Activated B cell treated with CpG ODN at 0.5 μM for 24 hours (primary cell): ENCODE measurements at regions of chr1 and their contacts with region 1.

Region 1: DNA sequence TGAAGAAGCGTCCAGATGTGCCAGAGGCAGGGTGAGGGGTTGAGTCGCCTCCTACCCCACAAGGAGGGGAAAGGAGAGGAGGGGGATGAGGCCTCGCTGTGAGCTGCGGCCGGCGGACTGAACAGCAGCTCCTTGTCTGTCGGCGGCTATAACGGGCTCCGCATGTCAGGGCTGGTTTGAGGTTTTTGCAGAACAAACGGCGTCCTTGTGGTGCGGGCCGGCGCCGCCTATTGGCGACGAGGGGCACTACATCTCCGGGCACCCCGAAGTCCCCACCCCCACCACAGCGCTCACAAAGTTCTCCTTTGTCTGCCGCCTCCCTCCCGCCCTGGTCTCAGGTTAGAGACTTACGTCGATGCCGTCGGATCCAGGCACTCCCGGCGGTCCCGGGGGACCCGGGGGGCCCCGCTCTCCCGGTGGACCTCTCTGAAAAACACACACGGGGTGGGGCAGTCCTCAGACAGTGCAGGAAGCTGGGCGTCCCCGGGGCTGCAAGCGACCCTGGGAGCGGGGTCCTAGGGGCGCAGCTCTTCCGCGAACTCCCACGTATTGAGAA is 1.8 kb downstream of the COL9A2 start:
- DNase-seq: peak; percentile 84
- ATAC-seq: peak; percentile 61
- H3K4me3 Mint-ChIP-seq: peak overlapping the region; percentile 85
- H3K27ac Mint-ChIP-seq: peak overlapping the region; percentile 51
- H3K4me1 Mint-ChIP-seq: peaks cover 53% of the 10 kb centered on the region
- H3K27me3 Mint-ChIP-seq: peaks cover 7% of the 10 kb centered on the region
- CTCF ChIP-seq: no peak

Region 2: GRCh38 chr1:40096977-40097782 is 218.1 kb before region 1 on chr1 and contains the start of gene PPT1:
- CTCF ChIA-PET with region 1: no interaction called
- POLR2A ChIA-PET with region 1: interaction called, 3 read pairs
- intact Hi-C with region 1: loop called (anchors 5 kb)
- DNase-seq: peak; percentile 69
- ATAC-seq: peak; percentile 86
- H3K4me3 Mint-ChIP-seq: peak within 1 kb of the TSS; percentile 94
- H3K27ac Mint-ChIP-seq: peak within 1 kb of the TSS; percentile 92
- H3K4me1 Mint-ChIP-seq: peaks cover 18% of the 10 kb centered on the region
- H3K27me3 Mint-ChIP-seq: peaks cover 5% of the 10 kb centered on the region
- CTCF ChIP-seq: no peak
- total RNA-seq, gene PPT1: 41.8 and 43.5 TPM in 2 replicates

Region 3: DNA sequence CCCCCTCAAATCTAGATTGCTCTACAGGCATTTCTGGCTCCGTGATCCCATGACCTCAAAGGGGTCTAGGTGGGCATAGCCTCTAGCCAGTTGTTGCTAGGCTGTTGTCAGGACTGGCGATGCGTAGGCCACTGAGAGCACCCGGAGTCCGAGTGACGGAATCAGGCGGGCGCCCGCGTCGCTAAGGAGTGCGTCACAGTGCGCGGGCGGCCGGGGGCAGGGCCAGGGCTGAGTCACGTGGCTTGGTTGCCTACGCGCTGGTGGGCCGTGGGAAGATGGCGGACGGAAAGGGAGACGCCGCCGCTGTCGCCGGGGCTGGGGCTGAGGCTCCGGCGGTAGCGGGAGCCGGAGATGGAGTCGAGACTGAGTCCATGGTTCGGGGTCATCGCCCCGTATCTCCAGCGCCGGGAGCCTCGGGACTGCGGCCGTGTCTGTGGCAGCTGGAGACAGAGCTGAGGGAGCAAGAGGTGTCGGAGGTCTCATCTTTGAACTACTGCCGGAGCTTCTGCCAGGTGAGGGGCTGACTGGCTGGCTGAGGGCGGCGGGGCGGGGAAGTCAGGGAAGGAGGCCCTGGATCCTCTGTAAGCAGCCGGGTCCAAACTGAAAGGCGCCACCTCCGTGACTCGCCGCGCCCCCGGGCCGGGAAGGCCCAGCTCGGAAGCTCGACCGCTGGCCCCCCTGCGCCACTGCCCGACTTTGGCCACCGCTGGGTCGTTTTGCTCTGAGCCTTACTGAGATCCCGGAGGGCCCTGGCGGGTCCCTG is 154.0 kb before region 1 on chr1 and contains the start of gene RLF:
- CTCF ChIA-PET with region 1: interaction called, 3 read pairs
- POLR2A ChIA-PET with region 1: interaction called, 12 read pairs
- intact Hi-C with region 1: no loop called
- DNase-seq: peak; percentile 94
- ATAC-seq: peak; percentile 96
- H3K4me3 Mint-ChIP-seq: no peak within 1 kb of the TSS
- H3K27ac Mint-ChIP-seq: no peak within 1 kb of the TSS
- H3K4me1 Mint-ChIP-seq: peaks cover 22% of the 10 kb centered on the region
- H3K27me3 Mint-ChIP-seq: no peaks in the 10 kb centered on the region
- CTCF ChIP-seq: no peak
- total RNA-seq, gene RLF: 18.1 and 19.2 TPM in 2 replicates

Region 4: DNA sequence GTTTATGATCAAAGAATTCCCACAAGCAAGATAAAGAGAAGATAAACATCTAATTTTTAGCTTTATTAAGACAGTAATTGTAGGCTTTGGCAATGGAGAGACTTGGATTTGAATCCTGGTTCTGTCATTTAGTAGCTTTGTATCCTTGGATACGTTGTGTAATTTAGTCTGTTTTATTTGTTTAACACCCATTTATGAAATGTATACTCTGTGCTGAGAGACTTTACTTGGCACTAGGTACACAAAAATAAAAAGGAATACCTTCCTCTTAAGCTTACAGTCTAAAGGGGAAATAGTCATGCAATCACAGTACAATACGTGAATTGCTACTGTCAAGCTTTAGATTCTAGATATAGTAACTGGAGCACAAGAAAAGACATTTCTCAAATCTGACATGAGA is 33.5 kb before region 1 on chr1:
- CTCF ChIA-PET with region 1: interaction called, 3 read pairs
- POLR2A ChIA-PET with region 1: interaction called, 4 read pairs
- intact Hi-C with region 1: loop called (anchors 5 kb)
- DNase-seq: no peak
- ATAC-seq: no peak
- H3K4me3 Mint-ChIP-seq: no peak overlapping the region
- H3K27ac Mint-ChIP-seq: no peak overlapping the region
- H3K4me1 Mint-ChIP-seq: no peaks in the 10 kb centered on the region
- H3K27me3 Mint-ChIP-seq: no peaks in the 10 kb centered on the region
- CTCF ChIP-seq: no peak

Region 5: DNA sequence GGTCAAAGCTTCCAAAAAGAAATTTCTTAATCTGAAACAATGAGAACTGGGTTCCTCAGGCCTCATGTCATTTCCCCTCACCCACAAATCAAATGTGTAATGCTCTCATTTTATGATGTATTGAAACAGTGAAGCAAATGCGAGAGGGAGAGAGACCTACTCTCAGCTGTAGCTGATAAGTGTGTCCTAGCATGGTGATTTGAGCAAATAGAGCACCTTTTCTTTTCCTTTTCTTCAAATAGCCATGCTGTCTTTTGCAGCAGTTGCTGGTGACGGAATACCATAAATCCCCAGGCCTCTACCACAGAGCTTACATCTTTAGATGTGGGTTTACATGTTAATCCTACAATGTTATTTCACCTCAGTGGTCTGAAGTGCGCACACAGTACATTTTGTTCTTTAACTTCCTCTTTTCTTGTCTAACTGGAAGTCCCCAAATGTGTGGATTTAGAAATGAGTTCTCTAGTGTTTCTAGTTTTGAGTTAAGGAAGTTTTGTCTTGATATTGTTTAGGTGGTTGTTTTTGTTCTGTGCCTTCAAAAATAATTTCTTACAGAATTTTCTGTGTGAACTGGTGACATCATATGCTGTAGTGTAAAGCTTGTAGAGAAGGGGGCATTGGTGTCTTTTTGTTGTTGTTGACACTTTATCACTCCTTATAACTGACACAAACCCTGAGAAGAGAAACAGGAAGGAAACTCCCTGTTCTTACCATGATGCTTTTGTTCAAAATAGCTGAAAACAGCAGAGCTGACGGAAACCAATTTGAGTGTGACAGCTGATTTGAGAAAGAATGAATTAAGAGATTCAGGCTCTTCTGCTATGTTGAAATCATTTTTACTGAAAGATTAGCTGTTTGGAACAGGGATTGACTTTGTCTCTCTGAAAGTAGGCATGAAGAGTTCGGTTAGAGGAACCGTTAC is 70.4 kb after region 1 on chr1:
- CTCF ChIA-PET with region 1: interaction called, 18 read pairs
- POLR2A ChIA-PET with region 1: interaction called, 51 read pairs
- intact Hi-C with region 1: loop called (anchors 1 kb)
- DNase-seq: no peak
- ATAC-seq: peak; percentile 71
- H3K4me3 Mint-ChIP-seq: peak overlapping the region; percentile 74
- H3K27ac Mint-ChIP-seq: peak overlapping the region; percentile 96
- H3K4me1 Mint-ChIP-seq: peaks cover 97% of the 10 kb centered on the region
- H3K27me3 Mint-ChIP-seq: no peaks in the 10 kb centered on the region
- CTCF ChIP-seq: no peak

Region 6: GRCh38 chr1:40691538-40692428 is 376.5 kb after region 1 on chr1 and contains the start of gene NFYC:
- CTCF ChIA-PET with region 1: no interaction called
- POLR2A ChIA-PET with region 1: interaction called, 3 read pairs
- intact Hi-C with region 1: loop called (anchors 10 kb)
- DNase-seq: peak; percentile 86
- ATAC-seq: peak; percentile 81
- H3K4me3 Mint-ChIP-seq: peak within 1 kb of the TSS; percentile 94
- H3K27ac Mint-ChIP-seq: peak within 1 kb of the TSS; percentile 94
- H3K4me1 Mint-ChIP-seq: peaks cover 70% of the 10 kb centered on the region
- H3K27me3 Mint-ChIP-seq: no peaks in the 10 kb centered on the region
- CTCF ChIP-seq: no peak
- total RNA-seq, gene NFYC: 68.7 and 76.0 TPM in 2 replicates

Region 7: DNA sequence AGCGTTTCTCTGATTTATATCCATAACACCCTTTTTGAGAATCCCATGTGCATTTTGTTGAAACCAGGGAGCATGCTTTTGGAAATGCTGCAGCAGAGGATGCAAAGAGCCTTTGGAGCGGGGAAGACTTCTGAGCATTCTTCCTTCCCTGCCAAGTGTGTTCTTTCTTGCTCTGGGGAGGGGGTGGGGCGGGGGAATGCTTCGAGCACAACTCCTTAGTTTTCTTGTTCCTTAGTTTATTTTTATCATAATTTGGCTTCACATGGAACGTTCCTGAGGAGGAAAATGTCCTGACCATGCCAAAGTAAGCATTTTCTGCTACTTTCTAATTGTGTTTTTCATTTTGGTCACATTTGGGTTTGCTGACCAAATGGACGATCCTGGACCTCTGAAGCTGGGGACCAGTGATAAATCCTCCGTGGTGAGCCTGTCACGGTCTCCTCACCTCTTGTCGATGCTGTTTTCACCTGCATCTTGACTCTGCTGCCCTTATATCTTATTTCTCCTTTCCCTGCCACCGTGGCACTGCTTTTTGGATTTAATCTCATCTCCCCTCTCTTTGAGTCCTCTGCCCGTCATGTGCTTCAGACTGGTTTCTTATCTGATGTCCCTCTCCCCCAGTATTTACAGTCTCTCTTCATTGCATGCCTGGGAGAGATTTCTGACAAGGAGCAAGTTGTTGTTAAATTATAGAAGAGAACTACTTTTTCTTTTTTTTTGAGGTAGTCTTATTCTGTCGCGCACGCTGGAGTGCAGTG is 666.6 kb after region 1 on chr1:
- CTCF ChIA-PET with region 1: no interaction called
- POLR2A ChIA-PET with region 1: no interaction called
- intact Hi-C with region 1: no loop called
- DNase-seq: no peak
- ATAC-seq: no peak
- H3K4me3 Mint-ChIP-seq: no peak overlapping the region
- H3K27ac Mint-ChIP-seq: no peak overlapping the region
- H3K4me1 Mint-ChIP-seq: peaks cover 19% of the 10 kb centered on the region
- H3K27me3 Mint-ChIP-seq: no peaks in the 10 kb centered on the region
- CTCF ChIP-seq: no peak